Caco-2 (cell line): ENCODE measurements at regions of chr15 and their contacts with region 1.

Region 1: DNA sequence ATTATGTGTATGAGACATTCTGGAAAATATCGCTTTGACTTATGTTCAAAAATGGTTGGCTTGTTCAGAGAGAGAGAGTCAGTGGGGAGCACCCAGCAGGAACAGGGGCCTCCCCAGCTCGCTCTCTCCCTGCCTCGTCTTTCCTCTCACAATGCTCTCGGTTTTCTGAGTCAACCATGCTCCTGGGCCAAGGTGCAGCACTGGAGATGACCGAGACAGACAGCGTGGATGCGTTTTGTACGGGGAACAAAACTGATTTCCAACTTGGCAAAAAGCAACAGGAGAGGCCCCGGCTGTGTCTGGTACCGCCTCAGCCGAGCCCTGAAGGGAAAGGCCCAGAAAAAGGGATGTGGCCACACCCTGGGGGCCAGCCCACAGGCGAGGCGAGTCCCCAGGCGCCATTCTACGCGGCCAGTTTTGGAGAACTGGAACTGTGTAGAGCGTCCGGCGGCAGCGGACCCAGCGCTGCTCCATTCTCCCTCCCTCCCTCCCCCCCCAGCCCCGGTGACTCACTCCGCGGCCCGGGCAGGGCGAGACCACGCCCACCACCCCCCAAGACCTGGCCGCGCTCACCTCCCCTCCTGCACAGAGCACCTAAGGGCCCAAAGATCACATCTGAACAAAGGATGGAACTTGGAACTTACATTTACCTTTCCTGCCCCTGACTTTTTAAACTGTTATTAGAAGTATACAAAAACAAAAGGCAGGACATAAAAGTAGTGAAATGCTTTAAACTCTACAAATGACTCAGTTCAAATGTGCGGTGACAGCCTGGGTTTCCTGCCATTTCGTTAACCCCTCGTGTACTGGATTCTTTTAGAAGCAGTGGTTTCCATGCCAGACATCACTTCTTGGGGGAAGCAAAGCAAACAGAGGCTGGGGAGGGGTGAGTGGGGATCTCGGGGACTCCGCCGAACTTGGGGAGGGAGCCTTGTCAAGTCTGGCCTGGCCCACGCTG is 12.7 kb downstream of the ATP10A start:
- DNase-seq: peak; percentile 81 to 86
- H3K4me3 ChIP-seq: peak overlapping the region; percentile 42
- H3K4me3 Mint-ChIP-seq: peak overlapping the region; percentile 77
- H3K27ac Mint-ChIP-seq: peak overlapping the region; percentile 93
- H3K4me1 ChIP-seq: peaks cover 23% of the 10 kb centered on the region
- H3K4me1 Mint-ChIP-seq: peaks cover 28% of the 10 kb centered on the region
- H3K27me3 ChIP-seq: no peaks in the 10 kb centered on the region
- H3K27me3 Mint-ChIP-seq: no peaks in the 10 kb centered on the region
- CTCF ChIP-seq: no peak

Region 2: DNA sequence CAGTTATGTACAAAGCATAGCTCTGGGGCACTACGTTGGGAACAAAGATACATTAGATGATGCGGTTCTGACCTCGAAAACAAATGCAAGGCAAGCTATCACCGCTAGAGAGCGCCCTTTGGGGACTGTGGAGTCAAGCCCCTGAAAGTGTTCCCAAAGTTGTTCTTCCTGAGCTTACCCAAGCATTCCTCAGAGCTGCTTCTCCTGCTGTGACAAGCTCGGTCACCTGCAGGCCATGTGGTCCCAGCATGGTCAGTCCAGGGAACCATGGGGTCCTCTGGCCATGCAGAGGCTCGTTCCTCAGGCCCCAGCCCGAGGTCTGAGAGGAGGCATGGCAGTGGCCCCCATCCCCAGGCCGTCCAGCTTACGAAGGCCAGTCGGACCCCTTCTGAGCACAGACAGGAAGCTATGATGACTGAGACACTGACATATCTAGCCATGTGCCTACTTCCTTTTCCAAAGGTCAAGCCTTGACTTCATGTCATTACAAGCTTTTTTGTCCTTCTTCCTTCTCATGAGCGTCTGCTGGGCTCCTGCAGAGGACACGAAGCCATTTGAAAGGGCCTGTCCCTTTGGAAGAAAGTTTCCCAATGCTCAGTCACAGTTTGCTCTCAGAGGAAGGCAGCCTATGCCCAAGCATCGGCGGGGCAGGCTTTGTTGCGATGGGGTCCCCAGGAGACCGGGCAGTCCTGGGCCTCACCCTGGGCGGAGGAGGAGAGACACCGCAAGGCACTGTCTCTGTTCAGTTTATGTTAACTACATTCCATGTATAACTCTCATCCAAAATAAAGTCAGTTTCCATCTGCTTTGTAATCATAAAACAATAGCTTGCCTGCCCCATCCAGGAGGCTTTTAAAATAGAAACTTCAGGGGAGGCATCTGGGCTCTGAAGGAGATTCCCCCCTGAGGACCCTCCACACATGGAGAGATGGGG is 66.6 kb before region 1 on chr15:
- CTCF ChIA-PET with region 1: no interaction called
- POLR2A ChIA-PET with region 1: no interaction called
- intact Hi-C with region 1: loop called (anchors 10 kb)
- DNase-seq: peak in 1 of 2 experiments; percentile 55
- H3K4me3 ChIP-seq: no peak overlapping the region
- H3K4me3 Mint-ChIP-seq: no peak overlapping the region
- H3K27ac Mint-ChIP-seq: no peak overlapping the region
- H3K4me1 ChIP-seq: peaks cover 6% of the 10 kb centered on the region; the same call in 1 of the 2 replicates
- H3K4me1 Mint-ChIP-seq: peaks cover 12% of the 10 kb centered on the region
- H3K27me3 ChIP-seq: no peaks in the 10 kb centered on the region
- H3K27me3 Mint-ChIP-seq: no peaks in the 10 kb centered on the region
- CTCF ChIP-seq: peak; percentile 15 to 39

Region 3: GRCh38 chr15:25877681-25878080 is 27.2 kb after region 1 on chr15:
- CTCF ChIA-PET with region 1: no interaction called
- POLR2A ChIA-PET with region 1: no interaction called
- intact Hi-C with region 1: loop called (anchors 2 kb)
- DNase-seq: peak; percentile 50 to 54
- H3K4me3 ChIP-seq: no peak overlapping the region
- H3K4me3 Mint-ChIP-seq: no peak overlapping the region
- H3K27ac Mint-ChIP-seq: peak overlapping the region; percentile 68
- H3K4me1 ChIP-seq: peaks cover 52% of the 10 kb centered on the region
- H3K4me1 Mint-ChIP-seq: peaks cover 30% of the 10 kb centered on the region
- H3K27me3 ChIP-seq: no peaks in the 10 kb centered on the region
- H3K27me3 Mint-ChIP-seq: no peaks in the 10 kb centered on the region
- CTCF ChIP-seq: no peak

Region 4: GRCh38 chr15:25899870-25900269 is 49.4 kb after region 1 on chr15:
- CTCF ChIA-PET with region 1: no interaction called
- POLR2A ChIA-PET with region 1: no interaction called
- intact Hi-C with region 1: loop called (anchors 5 kb)
- DNase-seq: no peak
- H3K4me3 ChIP-seq: no peak overlapping the region
- H3K4me3 Mint-ChIP-seq: no peak overlapping the region
- H3K27ac Mint-ChIP-seq: no peak overlapping the region
- H3K4me1 ChIP-seq: peaks cover 26% of the 10 kb centered on the region
- H3K4me1 Mint-ChIP-seq: peaks cover 20% of the 10 kb centered on the region
- H3K27me3 ChIP-seq: no peaks in the 10 kb centered on the region
- H3K27me3 Mint-ChIP-seq: no peaks in the 10 kb centered on the region
- CTCF ChIP-seq: no peak